Mucosa of descending colon (tissue), 3 donors: ENCODE measurements at regions of chr7 and their contacts with region 1.

Region 1: GRCh38 chr7:3897438-3898385 is 596.7 kb downstream of the SDK1 start:
- DNase-seq: peak in 1 of 3 donors; percentile 59
- ATAC-seq: peak; percentile 53
- H3K4me3 ChIP-seq: no peak overlapping the region
- H3K4me1 ChIP-seq: no peaks in the 10 kb centered on the region
- CTCF ChIP-seq: peak; percentile 45

Region 2: DNA sequence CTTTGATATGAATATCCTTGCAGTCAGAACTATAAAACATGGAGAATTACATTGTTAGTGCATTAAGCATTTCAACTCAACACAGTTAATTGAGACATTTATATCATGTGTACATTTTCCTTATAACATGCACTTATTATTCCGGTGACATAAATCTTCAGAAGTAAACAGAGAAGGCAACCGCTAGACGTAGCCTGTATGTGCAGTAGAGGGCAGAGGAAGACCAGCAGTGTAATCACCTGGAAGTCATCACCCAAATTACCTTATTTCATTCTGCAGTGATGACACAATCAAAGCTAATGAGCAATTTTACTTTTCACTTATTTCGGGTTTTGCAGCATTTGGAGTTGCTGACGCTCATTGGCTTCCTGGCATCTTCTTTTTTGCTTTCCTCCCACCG is 202.1 kb before region 1 on chr7:
- intact Hi-C with region 1: loop called in 1 of 2 experiments (anchors 10 kb)
- DNase-seq: peak in 1 of 3 donors; percentile 23
- ATAC-seq: no peak
- H3K4me3 ChIP-seq: no peak overlapping the region
- H3K4me1 ChIP-seq: no peaks in the 10 kb centered on the region
- CTCF ChIP-seq: no peak